Right ventricle myocardium inferior (tissue), 1 donor: ENCODE measurements at regions of chr17 and their contacts with region 1.

Region 1: DNA sequence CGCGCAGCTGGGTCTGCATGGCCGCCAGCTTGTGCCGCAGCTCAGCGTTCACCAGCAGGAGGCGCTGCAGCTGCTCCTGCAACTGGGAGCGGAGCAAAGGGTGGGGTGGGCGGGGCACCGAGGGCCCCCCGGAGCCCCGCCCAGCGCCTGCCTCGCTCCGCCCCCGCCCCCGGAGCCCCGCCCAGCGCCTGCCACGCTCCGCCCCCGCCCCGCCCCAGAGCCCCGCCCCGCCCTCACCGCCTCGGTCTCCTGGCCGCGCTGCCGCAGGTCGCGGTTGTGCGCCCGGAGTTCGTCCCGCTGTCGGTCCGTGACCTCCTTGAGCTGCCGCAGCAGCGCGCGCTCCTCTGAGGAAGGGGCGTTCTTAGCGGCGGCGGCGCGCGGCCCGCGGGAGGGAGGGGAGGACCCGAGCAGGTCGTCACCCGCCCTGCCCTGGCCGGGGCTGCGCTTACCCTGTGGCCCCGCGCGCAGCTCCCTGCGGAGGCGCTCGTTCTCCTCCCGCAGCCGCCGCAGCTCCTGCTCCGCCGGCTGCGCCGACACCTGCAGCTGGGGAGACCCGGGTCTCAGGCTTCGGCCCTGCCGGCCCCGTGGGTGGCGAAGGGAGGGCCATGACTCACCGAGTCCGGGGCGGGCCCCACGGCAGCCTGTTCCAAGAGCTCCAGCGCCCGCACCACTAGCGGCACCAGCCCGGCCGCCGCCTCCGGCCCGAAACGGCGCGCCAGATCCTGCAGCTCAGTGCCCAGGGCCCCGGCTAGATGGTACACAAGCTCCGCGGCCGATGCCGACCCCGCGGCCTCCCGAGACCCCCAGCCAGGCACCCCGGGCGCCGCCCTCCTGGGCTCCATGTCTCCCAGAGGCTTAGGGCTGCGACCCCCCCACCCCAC is 463 bp downstream of the RILP start:
- DNase-seq: peak; percentile 98
- ATAC-seq: peak; percentile 65

Region 2: GRCh38 chr17:1256699-1257098 is 392.5 kb before region 1 on chr17:
- intact Hi-C with region 1: loop called (anchors 5 kb)
- DNase-seq: no peak
- ATAC-seq: no peak

Region 3: DNA sequence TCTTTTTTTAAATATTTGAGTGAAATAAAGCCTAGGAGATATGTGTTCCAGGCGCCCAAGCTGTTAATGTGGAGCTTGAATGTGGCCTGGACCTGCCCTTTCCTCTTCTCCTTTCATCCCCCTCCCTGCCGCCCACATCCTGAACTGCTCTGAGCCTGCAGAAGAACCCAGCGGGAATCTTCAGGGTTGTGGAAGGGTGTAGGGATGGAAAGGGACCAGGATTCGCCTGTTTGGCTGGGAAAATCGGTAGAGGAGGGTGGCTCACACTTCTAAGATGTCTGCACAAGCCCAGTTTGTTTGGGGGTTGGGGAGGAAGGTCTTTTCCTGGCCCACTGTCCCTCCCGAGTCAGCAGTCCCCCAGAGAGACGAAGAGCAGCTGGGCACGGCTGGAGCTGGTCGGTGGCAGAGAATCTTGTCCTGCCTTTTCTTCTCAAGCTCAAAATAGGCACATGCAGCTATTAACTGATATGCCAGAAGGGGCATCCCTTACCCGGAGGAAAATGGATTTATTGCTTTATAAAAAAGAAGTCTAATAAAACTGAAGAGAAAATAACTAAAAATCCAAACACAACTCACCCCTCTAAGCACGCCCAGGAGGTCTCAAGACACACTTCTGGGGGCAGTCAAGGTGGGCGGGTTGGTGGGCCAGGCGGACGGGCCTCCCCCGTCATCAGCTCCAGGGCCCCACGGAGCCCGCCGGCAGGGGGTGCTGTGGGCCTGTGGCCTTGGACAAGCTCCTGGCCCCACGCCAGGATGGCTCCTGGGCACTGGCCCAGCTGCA is 75.1 kb before region 1 on chr17:
- intact Hi-C with region 1: loop called (anchors 1 kb)
- DNase-seq: peak; percentile 96
- ATAC-seq: peak; percentile 63

Region 4: DNA sequence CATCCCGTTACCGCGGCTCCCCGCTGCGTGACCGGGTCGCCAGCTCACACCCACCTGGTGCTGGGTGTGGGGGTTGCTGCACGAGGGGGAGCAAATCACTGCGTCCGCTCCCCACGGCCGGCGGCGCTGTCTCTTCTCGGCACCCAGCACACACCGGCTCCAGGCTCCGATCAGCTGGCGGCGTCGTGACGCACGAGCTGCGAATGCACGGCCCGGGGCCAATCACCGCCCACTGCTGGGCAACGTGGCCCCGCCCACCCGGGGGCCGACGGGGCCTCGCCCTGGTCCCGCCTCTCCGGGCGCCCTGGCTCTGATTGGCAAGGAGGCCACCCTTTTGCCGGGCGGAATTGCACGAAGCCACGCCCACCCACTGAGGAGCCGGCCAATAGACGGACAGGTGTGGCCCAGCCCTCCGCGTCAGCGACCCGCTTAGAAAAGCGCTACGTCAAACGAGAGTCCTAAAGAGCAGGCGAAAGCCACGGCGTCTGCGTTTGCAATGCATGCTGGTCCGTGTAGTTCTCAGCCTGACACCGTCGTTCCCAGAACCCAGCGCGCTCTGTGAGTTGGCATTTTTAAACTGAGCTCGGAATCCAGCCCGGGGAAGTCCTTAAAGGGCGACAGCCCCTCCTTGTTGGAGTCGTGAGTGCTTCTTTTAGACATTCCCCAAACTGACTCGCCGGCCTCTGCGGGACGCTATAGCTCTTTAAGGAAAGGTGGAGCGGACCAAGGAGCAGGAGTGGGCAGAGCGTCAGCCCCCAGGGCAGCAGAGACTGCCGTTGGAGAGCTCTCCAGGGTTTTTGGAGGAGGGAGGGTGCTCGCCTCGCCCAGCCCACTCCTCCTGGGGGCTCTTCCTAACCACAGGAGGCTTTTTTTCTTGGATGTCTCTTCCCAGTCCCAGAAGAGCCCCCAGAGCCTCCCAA is 67.1 kb after region 1 on chr17:
- intact Hi-C with region 1: loop called (anchors 2 kb)
- DNase-seq: peak; percentile 100
- ATAC-seq: peak; percentile 80